CD4-positive, alpha-beta T cell (primary cell): ENCODE measurements at regions of chr17 and their contacts with region 1.

Region 1: DNA sequence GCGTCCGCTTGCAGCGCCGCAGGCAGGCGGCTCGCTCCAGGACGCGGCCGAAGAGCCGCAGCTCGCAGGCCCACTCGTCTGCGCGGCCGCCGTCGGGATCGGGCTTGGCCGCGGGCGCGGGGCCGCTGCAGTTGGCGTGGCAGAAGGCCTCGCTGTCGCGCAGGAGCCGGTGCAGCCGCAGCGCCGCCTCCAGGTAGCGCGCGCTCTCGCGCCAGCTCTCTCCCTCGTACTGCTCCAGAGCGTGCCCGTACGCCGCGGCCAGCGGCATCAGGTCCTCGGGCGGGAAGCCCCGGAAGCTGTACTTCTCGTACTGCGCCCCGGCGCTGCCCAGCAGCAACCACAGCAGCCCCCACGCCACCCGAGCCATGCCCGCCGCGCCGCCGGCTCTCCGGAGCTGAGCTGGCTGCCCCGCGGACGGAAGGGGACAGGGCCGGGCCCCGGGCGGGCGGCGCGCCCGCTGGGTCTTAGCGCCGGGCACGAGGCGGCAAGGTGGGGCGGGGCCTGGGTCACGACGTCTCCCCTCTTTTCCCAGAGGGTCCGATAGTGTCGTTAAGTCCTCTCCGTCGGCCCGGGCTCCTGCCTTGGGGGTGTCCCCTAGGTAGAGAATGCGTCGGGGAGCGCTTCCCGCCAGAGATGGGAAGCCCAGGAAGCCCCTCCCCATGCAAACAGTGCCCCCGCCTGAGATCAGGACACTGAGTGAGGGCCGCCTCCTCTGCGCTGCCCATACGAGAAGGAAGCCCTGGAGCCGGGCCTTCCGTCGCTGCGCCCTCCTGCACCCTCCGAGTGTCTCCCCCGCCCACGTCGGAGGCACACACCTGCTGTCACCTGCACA is at the start of gene P3H4:
- DNase-seq: peak; percentile 44 to 90 (median 70)
- ATAC-seq: peak; percentile 91
- H3K4me3 ChIP-seq: peak within 1 kb of the TSS; percentile 60
- H3K4me3 Mint-ChIP-seq: peak within 1 kb of the TSS; percentile 97
- H3K27ac ChIP-seq: no peak within 1 kb of the TSS
- H3K27ac Mint-ChIP-seq: peak within 1 kb of the TSS; percentile 36
- H3K4me1 ChIP-seq: peaks cover 34% of the 10 kb centered on the region
- H3K4me1 Mint-ChIP-seq: peaks cover 22% of the 10 kb centered on the region
- H3K27me3 ChIP-seq: no peaks in the 10 kb centered on the region
- H3K27me3 Mint-ChIP-seq: no peaks in the 10 kb centered on the region
- CTCF ChIP-seq: peak; percentile 68
- total RNA-seq, gene P3H4: 1.3 to 2.3 TPM

Region 2: GRCh38 chr17:40818733-40819527 is 992.8 kb before region 1 on chr17:
- CTCF ChIA-PET with region 1: no interaction called
- POLR2A ChIA-PET with region 1: no interaction called
- intact Hi-C with region 1: loop called in 1 of 2 experiments (anchors 2 kb)
- DNase-seq: peak; percentile 68 to 96 (median 80)
- ATAC-seq: peak; percentile 83
- H3K4me3 ChIP-seq: peak overlapping the region; percentile 75
- H3K4me3 Mint-ChIP-seq: peak overlapping the region; percentile 96
- H3K27ac ChIP-seq: peak overlapping the region; percentile 62 to 74
- H3K27ac Mint-ChIP-seq: peak overlapping the region; percentile 89
- H3K4me1 ChIP-seq: peaks cover 5% of the 10 kb centered on the region
- H3K4me1 Mint-ChIP-seq: peaks cover 33% of the 10 kb centered on the region
- H3K27me3 ChIP-seq: peaks cover 0 to 1% of the 10 kb centered on the region in 2 experiments
- H3K27me3 Mint-ChIP-seq: peaks cover 15% of the 10 kb centered on the region
- CTCF ChIP-seq: no peak

Region 3: GRCh38 chr17:41835800-41836549 is 24.2 kb after region 1 on chr17 and contains the start of gene NT5C3B:
- CTCF ChIA-PET with region 1: no interaction called
- POLR2A ChIA-PET with region 1: interaction called, 10 read pairs
- intact Hi-C with region 1: no loop called
- DNase-seq: peak; percentile 14 to 78 (median 45)
- ATAC-seq: peak; percentile 79
- H3K4me3 ChIP-seq: peak within 1 kb of the TSS; percentile 69
- H3K4me3 Mint-ChIP-seq: peak within 1 kb of the TSS; percentile 92
- H3K27ac ChIP-seq: no peak within 1 kb of the TSS
- H3K27ac Mint-ChIP-seq: peak within 1 kb of the TSS; percentile 61
- H3K4me1 ChIP-seq: peaks cover 17% of the 10 kb centered on the region
- H3K4me1 Mint-ChIP-seq: peaks cover 19% of the 10 kb centered on the region
- H3K27me3 ChIP-seq: no peaks in the 10 kb centered on the region
- H3K27me3 Mint-ChIP-seq: no peaks in the 10 kb centered on the region
- CTCF ChIP-seq: no peak
- total RNA-seq, gene NT5C3B: 25.7 to 29.7 TPM